ENCODE measurements at regions of chr10 and their contacts with region 1.

Region 1: DNA sequence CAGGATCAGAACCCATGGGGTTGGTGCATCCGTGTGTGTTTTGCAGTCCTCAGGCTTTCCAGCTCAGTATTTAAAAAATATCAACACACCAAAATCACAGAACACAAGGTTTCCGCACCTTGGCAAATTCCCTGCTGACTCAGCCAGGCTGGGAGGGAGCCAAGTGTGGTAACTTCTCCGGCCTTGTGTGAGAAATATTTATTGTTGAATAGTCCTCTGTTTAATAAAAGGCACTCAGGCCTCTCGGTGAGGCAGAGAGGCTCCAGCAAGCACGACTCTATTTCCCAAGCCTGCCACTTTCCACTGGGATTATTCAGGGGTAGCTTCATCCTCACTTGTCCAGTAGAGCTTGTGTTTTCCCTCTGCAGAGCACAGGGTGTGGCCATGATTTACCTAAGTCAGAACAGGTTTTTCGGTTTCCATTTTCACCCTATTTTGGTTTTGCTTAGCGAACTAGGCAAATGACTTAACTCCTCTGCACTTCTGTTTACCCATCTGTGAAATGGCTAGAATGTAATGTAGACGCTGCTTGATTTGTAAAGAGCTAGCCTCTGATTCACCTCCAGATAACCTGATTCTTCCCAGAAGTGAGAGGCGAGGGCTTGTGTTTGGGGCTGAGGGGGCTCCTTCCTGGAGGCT is 13.0 kb upstream of the CHST15 start:
- DNase-seq: peak; percentile 86
- H3K4me3 ChIP-seq: peak overlapping the region; percentile 65
- H3K27ac ChIP-seq: peak overlapping the region; percentile 94
- H3K4me1 ChIP-seq: peaks cover 100% of the 10 kb centered on the region
- CTCF ChIP-seq: no peak

Region 2: GRCh38 chr10:123743976-123744411 is 362.4 kb before region 1 on chr10:
- CTCF ChIA-PET with region 1: no interaction called
- POLR2A ChIA-PET with region 1: no interaction called
- intact Hi-C with region 1: no loop called
- DNase-seq: no peak
- H3K4me3 ChIP-seq: no peak overlapping the region
- H3K27ac ChIP-seq: no peak overlapping the region
- H3K4me1 ChIP-seq: no peaks in the 10 kb centered on the region
- CTCF ChIP-seq: no peak

Region 3: DNA sequence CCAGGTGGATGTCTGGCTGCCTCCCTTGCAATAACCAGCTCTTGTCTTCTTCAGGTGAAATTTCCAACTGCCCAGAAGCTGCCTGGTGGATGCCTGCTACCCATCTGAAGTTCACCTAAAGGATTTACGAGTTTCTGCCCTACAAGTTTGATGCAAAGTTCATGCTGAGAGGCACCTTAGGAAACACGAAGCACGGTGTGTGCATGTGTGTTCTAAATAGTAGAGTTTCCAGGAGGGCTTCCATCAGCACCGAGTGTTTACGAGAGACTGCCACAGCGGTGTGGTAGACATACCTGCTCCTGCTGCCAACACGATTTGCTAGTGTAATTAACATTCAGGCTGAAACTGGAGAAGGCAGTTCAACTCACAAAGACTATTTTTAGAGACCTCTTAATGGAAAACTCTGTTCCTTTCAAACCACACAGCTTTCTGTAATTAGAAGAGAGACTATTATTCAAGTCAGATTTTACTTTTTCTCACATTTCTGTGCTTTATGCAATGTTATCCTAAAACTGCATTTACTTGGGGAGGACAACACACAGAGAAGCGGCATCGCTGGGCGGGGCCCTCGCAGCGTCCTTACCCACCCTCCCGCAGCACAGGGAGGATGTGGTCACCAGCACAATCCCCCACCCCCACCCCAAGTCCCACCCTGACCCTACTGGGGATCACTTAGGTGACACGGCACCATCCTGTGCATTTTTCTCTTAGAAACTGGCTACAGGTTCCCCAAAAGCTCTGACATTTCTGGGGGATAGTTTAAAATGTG is 199.3 kb before region 1 on chr10:
- CTCF ChIA-PET with region 1: no interaction called
- POLR2A ChIA-PET with region 1: no interaction called
- intact Hi-C with region 1: no loop called
- DNase-seq: no peak
- H3K4me3 ChIP-seq: no peak overlapping the region
- H3K27ac ChIP-seq: no peak overlapping the region
- H3K4me1 ChIP-seq: no peaks in the 10 kb centered on the region
- CTCF ChIP-seq: no peak

Region 4: GRCh38 chr10:123994417-123995081 is 111.8 kb before region 1 on chr10:
- CTCF ChIA-PET with region 1: interaction called, 6 read pairs
- POLR2A ChIA-PET with region 1: no interaction called
- intact Hi-C with region 1: loop called (anchors 5 kb)
- DNase-seq: peak; percentile 78
- H3K4me3 ChIP-seq: peak overlapping the region; percentile 41
- H3K27ac ChIP-seq: no peak overlapping the region
- H3K4me1 ChIP-seq: peaks cover 10% of the 10 kb centered on the region
- CTCF ChIP-seq: peak; percentile 97

Region 5: GRCh38 chr10:124074501-124075109 is 31.8 kb before region 1 on chr10:
- CTCF ChIA-PET with region 1: interaction called, 4 read pairs
- POLR2A ChIA-PET with region 1: interaction called, 56 read pairs
- intact Hi-C with region 1: no loop called
- DNase-seq: peak; percentile 65
- H3K4me3 ChIP-seq: peak overlapping the region; percentile 25
- H3K27ac ChIP-seq: peak overlapping the region; percentile 88
- H3K4me1 ChIP-seq: peaks cover 98% of the 10 kb centered on the region
- CTCF ChIP-seq: no peak

Region 6: GRCh38 chr10:124092860-124093773 is 13.2 kb before region 1 on chr10 and contains the start of gene CHST15:
- CTCF ChIA-PET with region 1: interaction called, 3 read pairs
- POLR2A ChIA-PET with region 1: interaction called, 9 read pairs
- intact Hi-C with region 1: loop called (anchors 1 kb)
- DNase-seq: peak; percentile 69
- H3K4me3 ChIP-seq: peak within 1 kb of the TSS; percentile 81
- H3K27ac ChIP-seq: peak within 1 kb of the TSS; percentile 68
- H3K4me1 ChIP-seq: peaks cover 42% of the 10 kb centered on the region
- CTCF ChIP-seq: peak; percentile 63
- total RNA-seq, gene CHST15: 19.9 and 26.4 TPM in 2 replicates

Region 7: DNA sequence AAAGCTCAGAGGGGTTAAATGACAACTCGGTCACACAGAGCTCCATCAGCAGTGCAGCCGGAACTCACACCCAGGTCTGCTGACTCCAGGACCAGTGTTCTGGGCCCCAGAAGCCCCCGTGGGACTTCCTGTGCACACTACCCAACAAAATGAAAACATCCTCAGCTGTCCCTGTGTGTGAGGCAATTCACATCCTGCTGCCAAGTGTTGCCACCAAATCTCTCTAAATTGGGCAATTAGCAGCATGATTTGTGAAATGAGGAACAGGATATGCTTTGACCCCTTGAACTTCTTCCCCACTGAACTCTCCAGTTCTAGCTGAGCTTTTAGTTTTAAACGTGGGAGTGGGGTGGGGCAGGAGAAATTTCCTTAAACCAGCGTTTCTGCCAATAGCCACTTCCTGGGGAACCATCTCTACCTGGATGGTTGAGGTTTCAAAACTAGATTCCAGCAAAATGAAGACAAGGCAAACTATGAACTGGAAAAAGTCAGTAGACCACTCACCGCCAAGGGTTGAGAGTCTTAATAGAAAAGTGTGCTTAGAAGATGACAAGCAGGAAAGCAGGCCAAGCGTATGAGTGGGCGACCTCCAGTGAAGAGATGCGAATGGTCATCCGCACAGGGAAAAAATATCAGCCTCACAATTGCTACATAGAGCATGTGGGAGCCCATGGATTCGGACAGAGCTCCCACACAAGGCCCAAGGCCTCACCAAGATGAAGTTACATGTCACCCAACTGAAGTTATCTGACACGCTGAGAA is 38.9 kb after region 1 on chr10:
- CTCF ChIA-PET with region 1: no interaction called
- POLR2A ChIA-PET with region 1: interaction called, 11 read pairs
- intact Hi-C with region 1: loop called (anchors 1 kb)
- DNase-seq: peak; percentile 87
- H3K4me3 ChIP-seq: peak overlapping the region; percentile 72
- H3K27ac ChIP-seq: peak overlapping the region; percentile 80
- H3K4me1 ChIP-seq: peaks cover 90% of the 10 kb centered on the region
- CTCF ChIP-seq: no peak

Region 8: DNA sequence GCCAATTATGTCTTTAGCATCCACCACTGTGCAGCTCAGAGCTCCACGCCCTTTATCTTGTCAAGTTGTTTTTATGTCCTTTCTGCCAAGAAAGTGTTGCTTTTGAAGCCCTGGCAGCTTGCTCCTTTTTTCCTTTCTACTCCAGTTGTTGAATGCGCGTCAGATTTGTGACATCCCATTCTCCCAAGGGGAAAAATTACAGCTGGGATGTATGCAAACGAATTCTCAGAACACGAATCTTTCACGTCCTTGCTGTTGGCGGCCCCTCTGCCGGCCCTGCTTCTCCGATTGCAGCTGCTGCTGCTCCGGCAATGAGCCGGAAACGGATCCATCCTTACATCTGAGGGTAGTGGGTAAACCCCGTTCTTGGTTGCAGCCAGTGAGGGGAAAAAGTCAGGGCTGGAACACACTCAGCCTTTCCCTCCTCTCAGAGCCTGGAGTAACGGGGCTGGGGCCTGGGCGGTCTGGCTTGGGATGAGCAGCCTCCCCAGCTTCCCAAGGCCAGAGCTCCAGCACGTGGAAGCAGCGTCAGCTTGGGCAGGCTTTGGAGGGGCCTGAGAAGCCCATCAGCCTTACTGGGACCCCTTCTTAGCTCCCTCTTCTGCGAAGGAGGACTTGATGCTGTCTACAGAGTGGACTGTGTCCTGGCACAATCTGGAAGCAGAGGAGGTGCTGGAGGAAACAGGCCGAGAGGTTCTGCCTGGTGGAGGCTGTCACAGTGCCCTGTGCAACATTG is 66.0 kb after region 1 on chr10:
- CTCF ChIA-PET with region 1: no interaction called
- POLR2A ChIA-PET with region 1: no interaction called
- intact Hi-C with region 1: no loop called
- DNase-seq: no peak
- H3K4me3 ChIP-seq: no peak overlapping the region
- H3K27ac ChIP-seq: no peak overlapping the region
- H3K4me1 ChIP-seq: peaks cover 13% of the 10 kb centered on the region
- CTCF ChIP-seq: no peak